ENCODE measurements at regions of chr2 and their contacts with region 1.

Region 1: DNA sequence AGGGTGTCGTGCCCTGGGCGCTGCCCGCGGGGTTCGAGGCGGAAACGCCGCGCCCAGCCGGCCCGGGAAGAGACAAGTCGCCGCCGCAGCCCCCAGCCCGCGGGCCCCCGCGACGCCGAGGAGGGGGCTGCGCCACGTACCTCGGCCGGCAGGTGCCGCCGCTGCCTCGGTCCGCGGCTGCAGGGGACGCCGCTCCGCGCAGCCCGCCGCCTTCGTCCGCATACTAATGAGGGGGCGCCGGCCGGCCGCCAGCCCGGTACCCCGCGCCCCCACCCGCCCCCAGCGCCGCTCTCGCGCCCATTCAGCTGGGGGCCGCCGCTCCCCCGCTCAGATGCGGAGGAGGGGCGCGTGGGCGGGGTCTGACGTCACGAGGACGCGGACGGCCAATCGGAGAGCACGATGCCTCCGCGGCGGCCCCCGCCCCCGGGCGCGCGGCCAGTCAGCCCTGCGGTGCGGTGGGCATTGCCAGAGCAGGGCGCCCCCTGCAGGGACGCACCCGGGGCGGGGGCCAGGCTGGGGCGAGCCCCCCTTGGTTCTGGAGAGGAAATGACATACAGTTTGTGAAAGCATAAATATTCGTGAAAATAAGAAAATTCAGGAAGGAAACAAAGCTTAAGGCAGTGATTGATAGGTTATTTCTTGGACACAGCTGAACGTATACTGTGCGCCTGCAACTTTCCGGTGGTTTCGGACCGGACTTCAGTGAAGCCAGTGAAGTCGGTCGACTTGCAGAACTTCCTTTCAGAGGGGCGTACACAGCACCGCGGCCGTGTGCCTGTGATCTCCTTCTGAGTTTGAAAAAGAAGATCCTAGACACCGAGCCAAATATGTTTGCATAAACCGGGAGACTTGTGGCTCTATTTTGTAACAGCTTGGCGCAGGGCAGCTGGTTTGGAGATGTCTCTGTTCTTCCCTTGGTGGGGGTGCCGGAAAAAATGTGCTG is at the start of gene ST3GAL5:
- DNase-seq: peak; percentile 63 to 85
- H3K4me3 ChIP-seq: peak within 1 kb of the TSS; percentile 88
- H3K27ac ChIP-seq: peak within 1 kb of the TSS; percentile 48
- H3K4me1 ChIP-seq: peaks cover 50% of the 10 kb centered on the region
- H3K27me3 ChIP-seq: no peaks in the 10 kb centered on the region
- CTCF ChIP-seq: peak; percentile 86
- total RNA-seq, gene ST3GAL5: 5.9 and 7.2 TPM in 2 replicates

Region 2: DNA sequence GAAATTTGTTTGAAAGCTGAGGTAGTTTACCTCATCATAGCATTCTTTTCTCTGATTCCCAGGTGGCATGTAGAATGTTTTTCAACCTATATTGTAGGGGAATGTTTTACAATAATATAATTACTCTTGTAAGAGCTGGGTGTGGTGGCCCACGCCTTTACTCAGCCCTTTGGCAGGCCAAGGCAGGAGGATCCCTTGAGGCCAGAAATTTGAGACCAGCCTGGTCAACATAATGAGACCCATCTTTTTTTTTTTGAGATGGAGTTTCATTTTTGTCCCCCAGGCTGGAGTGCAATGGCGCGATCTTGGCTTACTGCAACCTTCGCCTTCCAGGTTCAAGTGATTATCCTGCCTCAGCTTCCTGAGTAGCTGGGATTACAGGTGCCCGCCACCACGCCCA is 269.3 kb before region 1 on chr2:
- CTCF ChIA-PET with region 1: interaction called, 16 read pairs
- POLR2A ChIA-PET with region 1: no interaction called
- intact Hi-C with region 1: no loop called
- DNase-seq: no peak
- H3K4me3 ChIP-seq: no peak overlapping the region
- H3K27ac ChIP-seq: no peak overlapping the region; the same call in 1 of the 2 replicates
- H3K4me1 ChIP-seq: peaks cover 29% of the 10 kb centered on the region
- H3K27me3 ChIP-seq: no peaks in the 10 kb centered on the region
- CTCF ChIP-seq: no peak

Region 3: DNA sequence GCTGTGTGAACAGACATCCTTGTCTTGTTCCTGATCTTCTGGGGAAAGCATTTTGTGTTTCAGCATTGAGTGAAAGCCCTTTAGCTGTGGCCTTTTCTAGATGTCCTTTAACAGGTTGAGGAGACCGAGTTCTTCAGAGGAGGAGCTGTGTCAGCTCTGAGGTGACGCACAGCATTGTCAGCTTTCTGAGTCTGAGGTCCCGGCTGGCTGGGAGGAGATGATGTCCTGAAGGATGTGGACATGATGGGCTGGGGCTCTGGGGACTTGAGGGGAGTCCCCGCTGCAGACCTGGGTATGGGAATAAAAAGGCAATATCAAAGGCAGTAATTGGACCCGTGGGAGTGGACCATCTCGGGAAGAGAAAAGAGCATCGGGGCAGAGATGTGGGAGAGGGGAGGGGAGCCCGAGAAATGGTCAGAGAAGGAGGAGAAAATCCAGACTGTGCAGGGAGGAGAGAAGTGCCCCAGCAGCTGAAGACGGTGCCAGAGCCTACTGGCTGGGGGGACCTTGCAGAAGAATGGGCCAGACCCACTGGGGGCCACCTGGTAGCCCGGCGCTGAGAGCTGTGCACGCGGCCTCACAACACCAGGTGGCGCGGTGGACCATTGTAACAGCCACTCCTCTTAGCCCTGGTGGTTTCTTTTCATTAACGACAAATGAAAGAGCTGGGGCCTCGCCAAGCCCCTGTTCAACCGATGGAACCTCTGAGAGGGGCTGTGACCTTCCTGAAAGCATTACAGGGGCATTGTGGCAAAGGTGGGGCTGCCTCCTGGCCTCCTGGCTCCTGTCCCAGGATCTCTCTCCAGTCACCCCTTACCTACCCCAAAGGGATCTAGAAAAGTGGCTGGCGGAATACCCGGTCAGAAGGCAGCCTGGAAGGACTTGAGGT is 61.7 kb before region 1 on chr2:
- CTCF ChIA-PET with region 1: interaction called, 7 read pairs
- POLR2A ChIA-PET with region 1: no interaction called
- intact Hi-C with region 1: loop called (anchors 2 kb)
- DNase-seq: peak; percentile 49 to 65
- H3K4me3 ChIP-seq: no peak overlapping the region
- H3K27ac ChIP-seq: no peak overlapping the region
- H3K4me1 ChIP-seq: peaks cover 6% of the 10 kb centered on the region; the same call in 1 of the 2 replicates
- H3K27me3 ChIP-seq: no peaks in the 10 kb centered on the region
- CTCF ChIP-seq: peak; percentile 83

Region 4: GRCh38 chr2:85935746-85936208 is 46.8 kb after region 1 on chr2:
- CTCF ChIA-PET with region 1: no interaction called
- POLR2A ChIA-PET with region 1: no interaction called
- intact Hi-C with region 1: loop called (anchors 1 kb)
- DNase-seq: peak; percentile 69 to 97
- H3K4me3 ChIP-seq: peak overlapping the region; percentile 21; the same call in 1 of the 2 replicates
- H3K27ac ChIP-seq: peak overlapping the region; percentile 87
- H3K4me1 ChIP-seq: peaks cover 77% of the 10 kb centered on the region
- H3K27me3 ChIP-seq: no peaks in the 10 kb centered on the region
- CTCF ChIP-seq: no peak

Region 5: GRCh38 chr2:86062043-86062442 is 173.1 kb after region 1 on chr2:
- CTCF ChIA-PET with region 1: no interaction called
- POLR2A ChIA-PET with region 1: no interaction called
- intact Hi-C with region 1: loop called (anchors 5 kb)
- DNase-seq: peak in 1 of 2 experiments; percentile 91
- H3K4me3 ChIP-seq: peak overlapping the region; percentile 23; the same call in 1 of the 2 replicates
- H3K27ac ChIP-seq: peak overlapping the region; percentile 80
- H3K4me1 ChIP-seq: peaks cover 59% of the 10 kb centered on the region
- H3K27me3 ChIP-seq: no peaks in the 10 kb centered on the region
- CTCF ChIP-seq: no peak

Measured in PC-9 (cell line).